ENCODE measurements at regions of chr6 and their contacts with region 1.

Region 1: GRCh38 chr6:347232-347631 is 44.3 kb upstream of the IRF4 start:
- DNase-seq: peak; percentile 87
- H3K4me3 ChIP-seq: peak overlapping the region; percentile 10
- H3K27ac ChIP-seq: peak overlapping the region; percentile 77
- H3K4me1 ChIP-seq: peaks cover 62% of the 10 kb centered on the region
- CTCF ChIP-seq: no peak

Region 2: GRCh38 chr6:336159-337019 is 10.8 kb before region 1 on chr6:
- CTCF ChIA-PET with region 1: interaction called, 8 read pairs
- POLR2A ChIA-PET with region 1: interaction called, 77 read pairs
- intact Hi-C with region 1: no loop called
- DNase-seq: peak; percentile 53
- H3K4me3 ChIP-seq: no peak overlapping the region
- H3K27ac ChIP-seq: no peak overlapping the region
- H3K4me1 ChIP-seq: peaks cover 88% of the 10 kb centered on the region
- CTCF ChIP-seq: no peak

Measured in OCI-LY7 (cell line).